ENCODE measurements at regions of chr16 and their contacts with region 1.

Region 1: GRCh38 chr16:58487566-58488351 is 12.2 kb upstream of the NDRG4 start:
- DNase-seq: peak; percentile 44 to 76 (median 65)
- ATAC-seq: peak; percentile 88
- H3K4me3 ChIP-seq: no peak overlapping the region
- H3K4me3 Mint-ChIP-seq: peak overlapping the region in 4 of 10 donors; percentile 16 to 42 (median 32)
- H3K27ac ChIP-seq: no peak overlapping the region
- H3K27ac Mint-ChIP-seq: no peak overlapping the region
- H3K4me1 ChIP-seq: no peaks in the 10 kb centered on the region
- H3K4me1 Mint-ChIP-seq: peaks cover 0 to 3% (median 0%) of the 10 kb centered on the region in 7 donors
- H3K27me3 ChIP-seq: no peaks in the 10 kb centered on the region
- H3K27me3 Mint-ChIP-seq: peaks cover 0 to 15% (median 9%) of the 10 kb centered on the region in 5 donors

Region 2: GRCh38 chr16:57899771-57900661 is 587.7 kb before region 1 on chr16:
- CTCF ChIA-PET with region 1: no interaction called
- POLR2A ChIA-PET with region 1: no interaction called
- intact Hi-C with region 1: loop called in 1 of 2 experiments (anchors 2 kb)
- DNase-seq: peak; percentile 55 to 81 (median 71)
- ATAC-seq: peak; percentile 86
- H3K4me3 ChIP-seq: no peak overlapping the region
- H3K4me3 Mint-ChIP-seq: no peak overlapping the region
- H3K27ac ChIP-seq: no peak overlapping the region
- H3K27ac Mint-ChIP-seq: peak overlapping the region in 1 of 9 donors; percentile 1
- H3K4me1 ChIP-seq: no peaks in the 10 kb centered on the region
- H3K4me1 Mint-ChIP-seq: peaks cover under 1 to 6% (median 3%) of the 10 kb centered on the region in 7 donors
- H3K27me3 ChIP-seq: no peaks in the 10 kb centered on the region
- H3K27me3 Mint-ChIP-seq: peaks cover 4 to 11% (median 8%) of the 10 kb centered on the region in 5 donors

Region 3: GRCh38 chr16:58807276-58807675 is 319.5 kb after region 1 on chr16:
- CTCF ChIA-PET with region 1: no interaction called
- POLR2A ChIA-PET with region 1: no interaction called
- intact Hi-C with region 1: no loop called
- DNase-seq: no peak
- ATAC-seq: no peak
- H3K4me3 ChIP-seq: no peak overlapping the region
- H3K4me3 Mint-ChIP-seq: no peak overlapping the region
- H3K27ac ChIP-seq: no peak overlapping the region
- H3K27ac Mint-ChIP-seq: no peak overlapping the region
- H3K4me1 ChIP-seq: no peaks in the 10 kb centered on the region
- H3K4me1 Mint-ChIP-seq: no peaks in the 10 kb centered on the region
- H3K27me3 ChIP-seq: peaks cover 0 to 2% of the 10 kb centered on the region in 2 donors
- H3K27me3 Mint-ChIP-seq: peaks cover 0 to 37% (median 10%) of the 10 kb centered on the region in 5 donors